K562 (cell line): ENCODE measurements at regions of chr18 and their contacts with region 1.

Region 1: GRCh38 chr18:40346146-40346545 is 1608.9 kb upstream of the PIK3C3 start:
- DNase-seq: no peak
- ATAC-seq: no peak
- H3K4me3 ChIP-seq: no peak overlapping the region
- H3K27ac ChIP-seq: no peak overlapping the region
- H3K4me1 ChIP-seq: no peaks in the 10 kb centered on the region
- H3K27me3 ChIP-seq: no peaks in the 10 kb centered on the region
- CTCF ChIP-seq: no peak
- EP300 ChIP-seq: no peak
- POLR2A ChIP-seq: no peak
- RAD21 ChIP-seq: no peak

Region 2: DNA sequence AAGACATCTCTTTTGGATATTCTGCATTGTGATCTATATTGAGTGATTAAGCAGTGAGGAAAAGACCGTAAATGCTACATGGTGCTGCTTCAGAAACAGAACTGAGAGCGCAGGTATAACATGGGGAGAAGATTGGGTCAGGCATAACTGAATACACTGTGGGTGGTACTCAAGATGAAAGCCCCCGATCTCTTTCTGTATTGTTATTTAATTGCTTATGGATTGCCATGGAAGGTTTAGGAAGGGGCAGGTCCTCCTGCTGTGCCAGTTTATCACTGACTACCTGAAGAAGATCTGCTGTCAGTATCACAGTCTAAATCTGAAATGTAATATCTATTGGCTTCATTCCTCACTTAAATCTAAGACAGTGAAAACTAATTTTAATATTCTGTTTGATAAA is 1211.9 kb before region 1 on chr18:
- CTCF ChIA-PET with region 1: no interaction called
- POLR2A ChIA-PET with region 1: no interaction called
- in situ Hi-C with region 1: loop called (anchors 10 kb)
- intact Hi-C with region 1: no loop called
- DNase-seq: no peak
- ATAC-seq: no peak
- H3K4me3 ChIP-seq: no peak overlapping the region
- H3K27ac ChIP-seq: no peak overlapping the region
- H3K4me1 ChIP-seq: no peaks in the 10 kb centered on the region
- H3K27me3 ChIP-seq: no peaks in the 10 kb centered on the region
- CTCF ChIP-seq: no peak
- EP300 ChIP-seq: no peak
- POLR2A ChIP-seq: no peak
- RAD21 ChIP-seq: no peak